ENCODE measurements at regions of chr22 and their contacts with region 1.

Region 1: DNA sequence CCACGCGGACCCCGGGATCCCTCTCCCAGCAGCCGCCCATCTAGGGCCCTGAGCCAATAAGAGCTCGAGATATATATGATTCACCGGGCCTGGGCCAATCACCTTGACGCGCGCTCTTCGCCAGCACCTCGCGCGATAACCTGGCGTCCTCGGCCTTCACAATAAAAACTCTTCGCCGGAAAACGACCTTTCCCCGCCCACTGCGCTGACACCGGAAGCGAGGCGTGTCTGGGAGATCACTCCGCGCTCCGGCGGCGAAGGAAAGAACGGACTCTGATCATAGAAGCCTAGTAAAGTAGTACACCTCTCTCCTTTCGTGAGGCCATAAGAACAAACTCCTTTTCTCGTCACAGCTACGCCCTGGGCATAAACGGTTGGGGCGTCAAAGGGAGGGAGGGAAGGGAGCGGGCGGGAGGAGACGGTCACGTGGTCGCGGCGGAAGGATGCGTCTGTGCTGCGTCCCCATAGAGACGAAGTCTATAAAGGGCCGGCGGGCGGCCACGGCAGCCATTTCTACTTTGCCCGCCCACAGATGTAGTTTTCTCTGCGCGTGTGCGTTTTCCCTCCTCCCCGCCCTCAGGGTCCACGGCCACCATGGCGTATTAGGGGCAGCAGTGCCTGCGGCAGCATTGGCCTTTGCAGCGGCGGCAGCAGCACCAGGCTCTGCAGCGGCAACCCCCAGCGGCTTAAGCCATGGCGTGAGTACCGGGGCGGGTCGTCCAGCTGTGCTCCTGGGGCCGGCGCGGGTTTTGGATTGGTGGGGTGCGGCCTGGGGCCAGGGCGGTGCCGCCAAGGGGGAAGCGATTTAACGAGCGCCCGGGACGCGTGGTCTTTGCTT is at the start of gene ATF4:
- DNase-seq: peak; percentile 99
- H3K4me3 ChIP-seq: peak within 1 kb of the TSS; percentile 87
- H3K27ac ChIP-seq: peak within 1 kb of the TSS; percentile 99
- H3K27me3 ChIP-seq: no peaks in the 10 kb centered on the region
- CTCF ChIP-seq: no peak
- polyA plus RNA-seq, gene ATF4: 844 and 936 TPM in 2 replicates

Region 2: GRCh38 chr22:39197396-39197977 is 322.8 kb before region 1 on chr22:
- CTCF ChIA-PET with region 1: no interaction called
- POLR2A ChIA-PET with region 1: no interaction called
- DNase-seq: no peak
- H3K4me3 ChIP-seq: no peak overlapping the region
- H3K27ac ChIP-seq: no peak overlapping the region
- H3K27me3 ChIP-seq: peaks cover 4% of the 10 kb centered on the region
- CTCF ChIP-seq: no peak

Region 3: DNA sequence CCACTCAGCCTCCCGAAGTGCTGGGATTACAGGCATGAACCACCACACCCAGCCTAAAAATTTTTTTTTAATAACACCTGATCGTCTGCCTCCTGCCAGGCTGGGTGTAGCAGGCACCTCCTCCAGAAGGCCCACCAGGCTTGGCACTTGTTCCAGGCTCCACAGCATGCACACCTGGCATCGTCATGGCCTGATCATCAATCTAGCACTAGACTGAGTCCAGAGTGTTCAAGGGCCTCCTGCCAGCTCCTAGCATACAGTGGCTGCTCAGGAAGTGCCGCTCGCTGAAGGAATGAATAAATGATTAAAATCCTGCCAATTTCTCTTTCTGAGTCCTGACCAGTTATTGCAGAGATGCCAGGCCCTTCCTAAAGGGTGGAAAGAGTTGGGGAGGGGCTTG is 272.0 kb before region 1 on chr22:
- CTCF ChIA-PET with region 1: no interaction called
- POLR2A ChIA-PET with region 1: interaction called, 12 read pairs
- DNase-seq: no peak
- H3K4me3 ChIP-seq: no peak overlapping the region
- H3K27ac ChIP-seq: no peak overlapping the region
- H3K27me3 ChIP-seq: peaks cover 35% of the 10 kb centered on the region
- CTCF ChIP-seq: no peak

Region 4: DNA sequence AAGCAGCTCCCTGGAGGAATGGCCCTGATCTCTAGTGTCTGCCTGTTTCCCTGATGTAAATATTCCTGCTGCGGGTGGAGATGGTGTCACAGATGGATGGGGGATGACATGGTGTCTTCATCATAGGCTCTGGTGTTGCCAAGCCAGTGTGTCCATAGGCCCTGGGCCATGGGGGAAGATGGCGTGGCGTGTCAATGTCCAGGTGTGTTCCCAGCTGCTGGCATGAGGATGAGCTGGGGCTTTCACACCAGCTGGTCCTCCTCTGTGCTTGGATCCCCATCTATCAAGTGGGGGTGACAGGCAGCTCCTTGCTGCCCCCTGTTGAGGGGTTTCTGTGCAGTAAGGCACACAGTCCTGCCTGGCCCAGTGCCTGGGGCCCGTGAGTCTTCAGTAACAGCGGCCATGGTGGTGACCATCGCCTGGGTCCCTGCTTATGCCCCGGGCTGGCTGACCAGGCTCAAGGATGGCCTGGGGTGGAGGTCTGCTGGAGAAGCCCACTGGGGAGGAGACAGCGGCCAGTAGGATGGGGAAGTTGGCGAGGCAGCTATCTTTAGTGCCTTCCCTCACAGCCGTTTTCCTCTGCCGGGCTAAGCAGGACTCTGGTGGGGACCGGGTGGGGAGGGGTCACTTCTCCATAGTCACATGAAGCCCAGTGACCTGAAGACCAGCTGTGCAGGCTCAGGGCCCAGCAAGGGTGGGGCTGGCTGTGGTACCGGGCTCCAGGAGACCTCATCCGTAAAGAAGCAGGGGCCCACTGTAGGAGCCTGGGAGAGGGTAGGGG is 213.5 kb before region 1 on chr22:
- CTCF ChIA-PET with region 1: interaction called, 3 read pairs
- POLR2A ChIA-PET with region 1: interaction called, 11 read pairs
- DNase-seq: no peak
- H3K4me3 ChIP-seq: no peak overlapping the region
- H3K27ac ChIP-seq: no peak overlapping the region
- H3K27me3 ChIP-seq: no peaks in the 10 kb centered on the region
- CTCF ChIP-seq: peak; percentile 41

Region 5: DNA sequence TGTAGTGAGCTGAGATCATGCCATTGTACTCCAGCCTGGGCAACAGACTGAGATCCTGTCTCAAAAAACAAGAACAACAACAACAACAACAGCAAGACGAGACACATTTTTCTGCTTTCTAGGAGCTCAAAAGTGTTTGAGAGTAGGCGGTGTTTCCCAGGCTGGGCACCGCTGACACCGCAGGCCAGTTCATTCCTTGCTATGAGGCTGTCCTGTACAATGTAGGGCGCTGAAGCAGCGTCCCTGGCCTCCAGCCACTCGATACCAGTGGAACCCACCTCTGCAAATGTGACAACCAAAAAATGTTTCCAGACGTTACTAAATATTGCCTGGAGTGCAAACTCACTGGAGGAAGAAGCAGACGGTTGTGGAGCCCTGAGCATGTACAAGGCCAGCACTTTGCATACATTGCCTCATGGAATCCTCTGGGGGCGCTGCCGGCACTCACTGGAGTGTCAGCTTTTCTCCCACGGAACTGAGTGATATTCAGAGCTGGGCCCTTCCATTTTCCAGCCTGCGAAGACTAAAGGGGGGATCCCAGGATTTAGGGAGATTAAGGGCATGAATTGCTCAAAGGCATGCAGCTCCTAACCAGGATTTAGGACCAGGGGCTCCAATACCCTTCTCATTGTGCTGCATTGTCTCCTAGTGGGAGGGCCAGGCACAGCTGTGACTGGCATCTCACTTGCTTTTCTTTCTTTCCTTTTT is 24.0 kb before region 1 on chr22:
- CTCF ChIA-PET with region 1: interaction called, 17 read pairs
- POLR2A ChIA-PET with region 1: interaction called, 29 read pairs
- DNase-seq: no peak
- H3K4me3 ChIP-seq: no peak overlapping the region
- H3K27ac ChIP-seq: no peak overlapping the region
- H3K27me3 ChIP-seq: no peaks in the 10 kb centered on the region
- CTCF ChIP-seq: peak; percentile 85

Region 6: DNA sequence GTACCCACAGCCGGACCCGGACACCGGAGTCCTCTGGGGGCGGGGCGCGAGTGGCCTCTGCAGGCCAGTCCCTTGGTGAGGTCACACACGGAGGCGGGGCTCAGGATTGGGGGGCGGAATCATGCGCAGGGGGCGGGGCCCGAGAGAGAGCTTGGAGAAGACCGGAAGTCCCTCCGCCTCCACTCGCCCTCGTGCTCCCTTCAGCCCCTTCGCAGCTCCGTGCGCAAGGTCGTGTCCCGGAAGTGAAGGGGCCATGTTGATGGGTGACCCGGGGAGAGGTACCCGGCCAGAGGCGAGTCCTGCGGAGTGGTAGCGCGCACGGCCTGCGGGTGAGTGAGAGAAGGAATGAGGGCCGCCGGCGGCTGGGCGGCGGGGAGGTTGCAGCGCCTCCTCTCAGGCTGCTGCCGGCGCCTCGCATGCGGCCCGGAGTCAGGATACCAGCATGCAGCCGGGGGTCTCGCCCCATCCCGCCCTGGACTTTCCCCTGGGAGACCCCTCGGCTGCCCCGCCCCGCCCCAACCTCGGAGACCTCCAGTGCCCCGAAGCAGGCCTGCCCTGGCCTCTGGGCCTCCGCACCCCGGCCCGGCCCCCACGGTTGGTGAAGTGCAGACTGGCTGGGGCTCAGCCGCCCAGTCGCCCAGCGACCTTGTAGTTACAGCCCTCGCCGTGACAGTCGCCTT is 18.0 kb before region 1 on chr22 and contains the start of gene MIEF1:
- CTCF ChIA-PET with region 1: interaction called, 13 read pairs
- POLR2A ChIA-PET with region 1: interaction called, 39 read pairs
- DNase-seq: peak; percentile 80
- H3K4me3 ChIP-seq: peak within 1 kb of the TSS; percentile 77
- H3K27ac ChIP-seq: no peak within 1 kb of the TSS
- H3K27me3 ChIP-seq: no peaks in the 10 kb centered on the region
- CTCF ChIP-seq: 0 out of 2 replicates have a peak, but pooled peaks have one; percentile 12
- polyA plus RNA-seq, gene MIEF1: 18.9 and 19.2 TPM in 2 replicates

Region 7: GRCh38 chr22:39534591-39535356 is 14.5 kb after region 1 on chr22:
- CTCF ChIA-PET with region 1: interaction called, 6 read pairs
- POLR2A ChIA-PET with region 1: interaction called, 44 read pairs
- DNase-seq: no peak
- H3K4me3 ChIP-seq: no peak overlapping the region
- H3K27ac ChIP-seq: peak overlapping the region; percentile 1
- H3K27me3 ChIP-seq: peaks cover 3% of the 10 kb centered on the region
- CTCF ChIP-seq: peak; percentile 82

Region 8: DNA sequence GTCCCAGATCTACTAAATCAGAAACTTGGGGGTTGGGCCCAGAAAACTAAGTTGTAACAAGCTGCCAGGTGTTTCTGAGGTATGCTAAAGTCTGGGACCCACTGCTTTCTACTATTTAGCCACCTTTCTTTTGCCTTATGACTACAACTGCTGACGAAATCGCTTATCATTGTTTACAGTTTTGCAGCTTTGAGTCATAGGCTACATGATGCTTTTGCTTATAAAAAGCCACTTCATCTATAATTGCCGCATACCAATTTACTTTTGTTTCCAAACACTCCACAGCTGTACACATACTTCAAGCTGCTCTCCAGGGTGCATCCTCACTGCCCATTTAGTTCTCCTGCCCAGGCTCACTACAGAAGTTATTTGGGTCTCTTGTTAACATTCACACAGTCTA is 228.6 kb after region 1 on chr22:
- CTCF ChIA-PET with region 1: no interaction called
- POLR2A ChIA-PET with region 1: no interaction called
- DNase-seq: peak; percentile 90
- H3K4me3 ChIP-seq: no peak overlapping the region
- H3K27ac ChIP-seq: peak overlapping the region; percentile 78
- H3K27me3 ChIP-seq: peaks cover 16% of the 10 kb centered on the region
- CTCF ChIP-seq: no peak